ENCODE measurements at regions of chr11 and their contacts with region 1.

Region 1: DNA sequence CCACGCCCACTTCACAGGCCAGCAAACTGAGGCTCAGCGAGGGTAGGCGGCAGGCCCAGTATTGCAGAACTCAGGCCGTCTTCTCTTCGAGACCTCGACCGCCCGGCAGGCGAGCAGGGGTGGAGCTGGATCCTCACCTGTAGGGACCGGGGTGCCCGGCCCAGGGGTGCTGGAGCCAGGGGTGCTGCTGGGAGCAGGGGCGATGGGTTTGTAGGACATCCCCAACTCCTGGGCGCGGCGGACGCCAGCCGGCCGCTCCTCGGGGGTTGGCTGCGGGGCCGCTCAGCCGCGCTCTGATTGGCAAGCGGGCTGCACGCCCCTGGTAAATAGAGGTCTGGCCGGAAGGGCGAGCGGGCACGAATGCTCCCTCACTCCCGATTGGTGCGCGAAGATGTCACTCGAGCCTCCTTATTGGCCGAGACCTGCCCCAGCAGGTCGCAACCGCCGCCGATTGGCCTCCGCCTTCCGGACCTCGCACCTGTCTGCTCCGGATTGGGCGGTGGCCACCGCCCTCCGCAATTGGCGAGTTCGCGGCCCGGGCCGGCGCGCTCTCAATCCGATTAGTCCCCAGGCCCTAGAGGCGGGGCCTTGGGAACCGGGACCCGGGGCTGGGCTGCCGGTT is at the start of gene CDK2AP2:
- DNase-seq: peak; percentile 97 to 100 (median 98)
- ATAC-seq: peak; percentile 91
- H3K4me3 ChIP-seq: peak within 1 kb of the TSS; percentile 79
- H3K27ac ChIP-seq: peak within 1 kb of the TSS; percentile 92
- H3K4me1 ChIP-seq: peaks cover 28 to 60% of the 10 kb centered on the region in 2 experiments
- H3K27me3 ChIP-seq: no peaks in the 10 kb centered on the region
- CTCF ChIP-seq: 0 out of 6 replicates have a peak, but pooled peaks of 1 of the 3 experiments have one; percentile 1
- EP300 ChIP-seq: no peak
- POLR2A ChIP-seq: peak; percentile 65; the same call in 1 of the 2 replicates
- RAD21 ChIP-seq: no peak
- polyA plus RNA-seq, gene CDK2AP2: 4.4 to 8.4 TPM

Region 2: DNA sequence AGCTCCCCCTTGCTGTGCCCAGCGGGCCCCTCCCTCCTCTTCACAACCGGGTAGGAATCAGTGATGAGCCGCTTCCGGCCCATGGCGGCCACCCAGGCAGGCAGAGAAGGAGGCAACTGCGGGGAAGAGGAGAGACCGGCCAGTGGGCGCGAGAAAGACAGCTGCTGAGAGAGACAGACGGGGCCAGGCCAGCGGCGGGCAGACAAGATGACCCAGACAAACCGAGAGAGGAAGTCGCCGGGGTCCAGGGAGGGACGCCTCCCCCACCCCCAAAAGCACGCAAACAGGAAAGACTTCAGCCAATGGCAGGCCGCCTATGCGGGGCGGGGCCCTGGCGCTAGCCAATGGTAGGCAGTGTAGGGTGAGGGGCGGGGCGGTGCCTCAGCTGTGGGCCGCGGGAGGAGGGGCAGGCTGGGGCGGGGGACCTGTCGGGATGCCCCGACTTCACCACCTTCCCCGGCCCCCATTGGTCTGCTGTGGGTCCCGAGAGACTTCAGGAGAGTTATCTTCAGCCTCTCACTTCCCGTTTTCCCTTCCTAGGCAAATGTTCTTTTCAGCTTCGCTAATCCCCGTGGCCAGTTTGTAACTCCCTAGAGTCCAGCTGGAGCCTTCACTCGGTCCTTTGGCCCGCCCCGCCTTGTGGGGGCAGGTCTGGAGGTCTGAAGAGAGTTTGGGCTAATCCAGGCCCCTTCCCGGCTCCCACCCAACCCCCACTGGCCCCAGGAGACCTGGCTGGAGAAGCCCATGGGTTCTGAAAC is 154.5 kb before region 1 on chr11 and contains the start of gene POLD4:
- CTCF ChIA-PET with region 1: interaction called, 4 read pairs
- POLR2A ChIA-PET with region 1: no interaction called
- in situ Hi-C with region 1: no loop called
- intact Hi-C with region 1: loop called (anchors 5 kb)
- DNase-seq: peak; percentile 98 to 99 (median 98)
- ATAC-seq: peak; percentile 94
- H3K4me3 ChIP-seq: peak within 1 kb of the TSS; percentile 76
- H3K27ac ChIP-seq: peak within 1 kb of the TSS; percentile 92
- H3K4me1 ChIP-seq: peaks cover 64% of the 10 kb centered on the region in 2 experiments
- H3K27me3 ChIP-seq: no peaks in the 10 kb centered on the region
- CTCF ChIP-seq: no peak
- EP300 ChIP-seq: no peak; the same call in 1 of the 2 replicates
- POLR2A ChIP-seq: peak; percentile 93
- RAD21 ChIP-seq: no peak
- polyA plus RNA-seq, gene POLD4: 5.8 to 6.1 TPM

Region 3: DNA sequence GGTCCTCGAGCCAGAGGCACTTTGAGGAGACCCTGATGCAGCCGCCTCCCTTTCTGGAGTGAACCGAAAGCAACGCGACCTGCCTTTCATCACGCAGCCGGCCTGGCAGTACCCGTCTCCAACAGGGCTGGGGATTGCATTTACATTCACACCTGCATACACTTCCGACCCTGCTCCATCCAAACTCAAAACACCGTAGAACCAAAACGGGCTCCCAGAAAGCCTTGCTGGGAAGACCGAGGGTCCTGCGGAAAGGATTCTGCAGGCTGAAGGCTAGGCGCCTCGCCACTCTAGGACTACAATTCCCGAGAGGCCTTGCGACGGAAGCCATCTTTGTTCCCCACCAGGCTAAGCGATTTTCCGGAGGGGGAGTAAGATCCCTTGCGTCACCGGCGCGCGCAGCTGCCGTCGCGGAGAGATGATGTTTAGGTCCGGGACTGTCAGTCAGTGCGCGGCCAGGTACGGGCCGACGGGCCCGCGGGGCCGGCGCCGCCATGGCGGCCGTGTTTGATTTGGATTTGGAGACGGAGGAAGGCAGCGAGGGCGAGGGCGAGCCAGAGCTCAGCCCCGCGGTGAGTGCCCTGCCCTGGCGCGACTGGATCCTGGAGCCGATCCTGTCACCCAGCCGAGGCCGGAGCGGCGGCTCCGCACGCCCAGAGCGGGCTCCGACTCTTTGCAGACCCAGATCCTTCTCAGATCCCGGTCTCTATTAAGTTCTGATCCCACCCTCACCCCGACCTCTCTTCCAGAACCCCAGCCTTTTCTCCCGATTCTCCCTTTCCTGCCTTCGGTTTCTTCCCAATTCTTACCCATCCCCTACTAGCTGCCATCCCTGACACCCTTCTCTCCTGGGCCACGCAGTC is 79.7 kb before region 1 on chr11 and contains the start of gene RPS6KB2:
- CTCF ChIA-PET with region 1: no interaction called
- POLR2A ChIA-PET with region 1: no interaction called
- in situ Hi-C with region 1: no loop called
- intact Hi-C with region 1: loop called (anchors 5 kb)
- DNase-seq: peak; percentile 96 to 99 (median 98)
- ATAC-seq: peak; percentile 92
- H3K4me3 ChIP-seq: peak within 1 kb of the TSS; percentile 83
- H3K27ac ChIP-seq: peak within 1 kb of the TSS; percentile 78
- H3K4me1 ChIP-seq: peaks cover 9 to 43% of the 10 kb centered on the region in 2 experiments; a peak in 4 of 5 replicates
- H3K27me3 ChIP-seq: no peaks in the 10 kb centered on the region
- CTCF ChIP-seq: no peak
- EP300 ChIP-seq: no peak
- POLR2A ChIP-seq: peak; percentile 89
- RAD21 ChIP-seq: no peak
- polyA plus RNA-seq, gene RPS6KB2: 0.42 to 3.1 TPM

Region 4: GRCh38 chr11:67468835-67469811 is 38.9 kb before region 1 on chr11 and contains the start of gene TMEM134:
- CTCF ChIA-PET with region 1: no interaction called
- POLR2A ChIA-PET with region 1: no interaction called
- in situ Hi-C with region 1: no loop called
- intact Hi-C with region 1: loop called (anchors 5 kb)
- DNase-seq: peak; percentile 92 to 96 (median 94)
- ATAC-seq: peak; percentile 87
- H3K4me3 ChIP-seq: peak within 1 kb of the TSS; percentile 76
- H3K27ac ChIP-seq: peak within 1 kb of the TSS; percentile 72
- H3K4me1 ChIP-seq: peaks cover 9 to 41% of the 10 kb centered on the region in 2 experiments; a peak in 4 of 5 replicates
- H3K27me3 ChIP-seq: no peaks in the 10 kb centered on the region
- CTCF ChIP-seq: peak; percentile 60 to 84 (median 75)
- EP300 ChIP-seq: no peak
- POLR2A ChIP-seq: peak; percentile 82
- RAD21 ChIP-seq: peak; percentile 54 to 76
- polyA plus RNA-seq, gene TMEM134: 0.63 to 1.4 TPM

Region 5: GRCh38 chr11:67482825-67483798 is 24.9 kb before region 1 on chr11 and contains the start of gene AIP:
- CTCF ChIA-PET with region 1: no interaction called
- POLR2A ChIA-PET with region 1: no interaction called
- in situ Hi-C with region 1: no loop called
- intact Hi-C with region 1: loop called (anchors 1 kb)
- DNase-seq: peak; percentile 97 to 99 (median 98)
- ATAC-seq: peak; percentile 98
- H3K4me3 ChIP-seq: peak within 1 kb of the TSS; percentile 49
- H3K27ac ChIP-seq: peak within 1 kb of the TSS; percentile 73
- H3K4me1 ChIP-seq: peaks cover 30 to 49% of the 10 kb centered on the region in 2 experiments
- H3K27me3 ChIP-seq: no peaks in the 10 kb centered on the region
- CTCF ChIP-seq: 0 out of 6 replicates have a peak, but pooled peaks of 2 of the 3 experiments have one; percentile 7 to 12
- EP300 ChIP-seq: no peak
- POLR2A ChIP-seq: peak; percentile 81
- RAD21 ChIP-seq: no peak
- polyA plus RNA-seq, gene AIP: 5.2 to 16.2 TPM

Region 6: GRCh38 chr11:67583247-67584204 is 75.6 kb after region 1 on chr11 and contains the start of gene GSTP1:
- CTCF ChIA-PET with region 1: interaction called, 4 read pairs
- POLR2A ChIA-PET with region 1: no interaction called
- in situ Hi-C with region 1: no loop called
- intact Hi-C with region 1: loop called (anchors 5 kb)
- DNase-seq: peak; percentile 94 to 96 (median 94)
- ATAC-seq: peak; percentile 95
- H3K4me3 ChIP-seq: peak within 1 kb of the TSS; percentile 62
- H3K27ac ChIP-seq: peak within 1 kb of the TSS; percentile 89
- H3K4me1 ChIP-seq: peaks cover 33 to 49% of the 10 kb centered on the region in 2 experiments
- H3K27me3 ChIP-seq: no peaks in the 10 kb centered on the region
- CTCF ChIP-seq: peak; percentile 88 to 90 (median 89)
- EP300 ChIP-seq: no peak
- POLR2A ChIP-seq: peak; percentile 95
- RAD21 ChIP-seq: peak; percentile 68 to 70
- polyA plus RNA-seq, gene GSTP1: 739 to 1,204 TPM

Region 7: GRCh38 chr11:67685641-67686495 is 177.9 kb after region 1 on chr11:
- CTCF ChIA-PET with region 1: no interaction called
- POLR2A ChIA-PET with region 1: no interaction called
- in situ Hi-C with region 1: no loop called
- intact Hi-C with region 1: no loop called
- DNase-seq: no peak
- ATAC-seq: no peak
- H3K4me3 ChIP-seq: no peak overlapping the region
- H3K27ac ChIP-seq: no peak overlapping the region
- H3K4me1 ChIP-seq: no peaks in the 10 kb centered on the region; a peak in 1 of 5 replicates
- H3K27me3 ChIP-seq: peaks cover 11 to 24% of the 10 kb centered on the region in 2 experiments
- CTCF ChIP-seq: no peak
- EP300 ChIP-seq: no peak
- POLR2A ChIP-seq: no peak
- RAD21 ChIP-seq: no peak